ENCODE measurements at regions of chr15 and their contacts with region 1.

Region 1: DNA sequence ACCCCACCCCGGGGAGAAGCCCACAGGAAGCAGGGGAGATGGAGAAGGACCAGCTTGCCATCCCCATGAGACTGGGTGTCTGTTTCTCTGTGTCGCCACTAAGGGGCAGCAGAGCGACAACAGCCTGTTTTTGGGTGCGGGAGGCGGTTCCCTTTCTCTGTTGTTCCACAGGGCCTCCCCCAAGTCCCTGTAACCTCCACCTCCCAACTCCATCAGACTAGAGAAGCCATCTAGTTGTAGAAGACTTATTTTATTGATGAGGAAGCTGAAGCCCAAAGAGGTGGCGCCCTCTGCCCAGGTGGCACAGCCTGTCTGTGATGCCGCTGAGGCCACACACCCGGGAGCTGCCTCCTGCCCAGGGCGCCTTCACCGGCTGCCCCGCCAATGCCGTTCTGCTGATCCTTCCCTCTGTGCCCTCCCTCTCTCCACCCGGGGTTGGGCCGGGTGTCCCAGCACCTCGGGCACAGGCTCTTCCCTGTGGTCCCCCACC is 3.9 kb upstream of the CCDC9B start:
- DNase-seq: peak; percentile 83
- ATAC-seq: peak; percentile 85
- H3K4me3 Mint-ChIP-seq: no peak overlapping the region
- H3K27ac Mint-ChIP-seq: no peak overlapping the region
- H3K4me1 Mint-ChIP-seq: peaks cover 5% of the 10 kb centered on the region
- H3K27me3 Mint-ChIP-seq: no peaks in the 10 kb centered on the region

Region 2: DNA sequence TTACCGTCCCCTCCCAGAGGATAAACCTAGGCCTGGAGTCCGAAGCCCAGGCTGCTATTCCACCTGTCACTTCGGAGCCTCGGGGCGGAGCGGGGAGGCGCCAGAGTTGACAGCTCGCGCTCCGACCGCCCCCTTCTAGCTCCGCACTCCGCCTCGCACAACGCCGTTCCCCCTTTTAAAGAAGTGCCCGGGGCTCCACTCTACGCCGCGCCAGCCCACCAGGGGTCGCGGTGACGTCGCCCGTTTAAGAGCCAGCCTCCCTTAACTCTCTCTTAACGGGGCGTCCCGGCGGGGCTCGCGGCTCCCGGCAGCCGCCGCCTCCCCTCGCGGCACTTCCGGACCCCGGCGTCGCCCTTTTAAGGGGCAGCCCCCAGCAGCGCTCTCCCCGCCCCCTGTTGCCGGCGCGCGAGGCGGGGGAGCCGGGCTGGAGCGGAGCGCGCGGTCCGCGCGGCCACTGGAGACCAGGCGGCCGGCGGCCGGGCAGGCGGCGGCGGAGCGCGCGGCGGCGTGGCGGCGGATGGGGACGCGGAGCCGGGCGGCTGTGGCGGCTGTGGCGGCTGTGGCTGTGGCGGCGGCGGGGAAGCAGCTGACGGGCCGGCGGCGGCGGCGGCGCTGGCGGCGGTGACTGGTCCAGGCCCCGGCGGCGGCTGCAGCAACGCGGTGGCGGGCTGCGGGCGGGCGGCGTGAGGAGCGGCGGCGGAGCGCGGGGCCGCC is 21.3 kb before region 1 on chr15 and contains the start of gene INAFM2:
- CTCF ChIA-PET with region 1: interaction called, 326 read pairs
- POLR2A ChIA-PET with region 1: no interaction called
- DNase-seq: peak; percentile 95
- ATAC-seq: peak; percentile 91
- H3K4me3 Mint-ChIP-seq: peak within 1 kb of the TSS; percentile 73
- H3K27ac Mint-ChIP-seq: no peak within 1 kb of the TSS
- H3K4me1 Mint-ChIP-seq: peaks cover 31% of the 10 kb centered on the region
- H3K27me3 Mint-ChIP-seq: peaks cover 8% of the 10 kb centered on the region
- total RNA-seq, gene INAFM2: 8.7 to 9.4 TPM

Region 3: DNA sequence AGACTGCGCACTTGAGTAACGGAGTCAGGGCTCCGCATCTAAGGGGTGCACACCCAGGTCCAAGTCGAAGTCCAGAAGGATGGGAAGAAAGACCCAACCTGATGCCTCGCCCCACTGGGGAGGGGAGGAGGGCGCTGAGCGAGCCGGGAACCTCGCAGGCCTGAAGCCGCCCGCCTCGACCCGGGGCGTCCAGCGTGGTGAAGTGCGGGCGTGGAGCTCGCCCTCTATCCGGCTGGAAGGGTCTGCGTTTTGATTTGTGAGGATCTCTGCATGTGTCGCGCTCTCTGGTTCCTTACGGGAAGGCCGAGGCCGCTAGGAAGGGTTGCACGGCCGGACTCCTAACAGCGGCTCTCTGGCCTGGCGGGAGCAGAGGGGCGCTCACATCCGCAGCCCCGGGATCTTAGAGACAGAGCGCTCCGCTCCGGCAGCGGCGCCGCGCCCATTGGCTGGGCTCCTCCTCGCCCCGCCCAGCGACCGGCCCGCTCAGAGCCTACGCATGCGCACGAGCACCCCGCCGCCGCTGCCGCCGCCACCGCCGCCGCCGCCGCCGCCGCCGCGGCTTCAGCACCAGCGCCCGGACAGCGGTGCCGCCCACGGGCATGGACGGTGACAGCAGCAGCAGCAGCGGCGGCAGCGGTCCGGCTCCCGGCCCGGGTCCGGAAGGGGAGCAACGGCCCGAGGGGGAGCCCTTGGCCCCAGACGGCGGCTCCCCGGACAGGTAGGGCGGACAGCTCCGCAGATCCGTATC is 13.2 kb after region 1 on chr15 and contains the start of gene DISP2:
- CTCF ChIA-PET with region 1: interaction called, 27 read pairs
- POLR2A ChIA-PET with region 1: interaction called, 4 read pairs
- DNase-seq: peak; percentile 90
- ATAC-seq: peak; percentile 95
- H3K4me3 Mint-ChIP-seq: peak within 1 kb of the TSS; percentile 78
- H3K27ac Mint-ChIP-seq: no peak within 1 kb of the TSS
- H3K4me1 Mint-ChIP-seq: peaks cover 12% of the 10 kb centered on the region
- H3K27me3 Mint-ChIP-seq: peaks cover 11% of the 10 kb centered on the region
- total RNA-seq, gene DISP2: 0.82 to 2.6 TPM

Region 4: GRCh38 chr15:40372981-40373380 is 28.3 kb after region 1 on chr15:
- CTCF ChIA-PET with region 1: interaction called, 51 read pairs
- POLR2A ChIA-PET with region 1: no interaction called
- DNase-seq: no peak
- ATAC-seq: no peak
- H3K4me3 Mint-ChIP-seq: no peak overlapping the region
- H3K27ac Mint-ChIP-seq: no peak overlapping the region
- H3K4me1 Mint-ChIP-seq: peaks cover 8% of the 10 kb centered on the region
- H3K27me3 Mint-ChIP-seq: peaks cover 15% of the 10 kb centered on the region

Region 5: DNA sequence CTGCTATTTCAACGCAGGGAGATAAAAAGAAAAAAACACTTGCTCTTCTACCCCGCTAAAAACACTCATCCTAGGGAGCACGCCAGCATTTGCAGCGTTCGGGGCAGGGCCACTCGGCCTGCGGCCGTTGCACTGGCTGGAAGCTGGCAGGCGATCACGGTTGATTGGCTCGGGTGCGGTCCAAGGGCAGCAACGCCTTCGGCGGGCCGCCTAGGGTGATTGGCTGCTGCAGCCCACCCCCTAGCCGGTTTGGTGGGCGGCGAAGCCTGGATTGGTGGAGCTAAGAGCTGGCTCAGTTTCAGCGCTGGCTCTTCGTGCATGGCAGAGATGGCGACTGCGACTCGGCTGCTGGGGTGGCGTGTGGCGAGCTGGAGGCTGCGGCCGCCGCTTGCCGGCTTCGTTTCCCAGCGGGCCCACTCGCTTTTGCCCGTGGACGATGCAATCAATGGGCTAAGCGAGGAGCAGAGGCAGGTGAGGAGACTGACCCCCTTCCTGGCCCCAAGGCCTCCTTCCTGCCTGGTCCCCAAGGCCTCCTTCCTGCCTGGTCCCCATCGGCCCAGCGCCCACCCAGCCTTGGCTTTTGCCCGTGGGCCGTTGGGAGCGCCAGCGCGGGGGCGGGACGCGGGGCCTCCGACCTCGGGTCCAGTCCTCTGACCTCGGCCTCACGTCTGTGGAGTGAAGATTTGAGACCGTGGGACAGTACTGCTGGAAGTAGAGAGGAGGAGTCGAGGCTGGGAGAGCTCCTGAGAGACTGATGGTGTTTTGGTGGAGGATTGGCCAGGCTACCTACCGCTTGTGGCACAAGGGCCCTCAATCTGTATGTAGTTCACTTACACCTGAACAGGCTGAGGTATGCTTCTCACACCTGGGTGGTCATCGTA is 61.1 kb after region 1 on chr15 and contains the start of gene IVD:
- CTCF ChIA-PET with region 1: interaction called, 15 read pairs
- POLR2A ChIA-PET with region 1: no interaction called
- DNase-seq: peak; percentile 95
- ATAC-seq: peak; percentile 100
- H3K4me3 Mint-ChIP-seq: peak within 1 kb of the TSS; percentile 86
- H3K27ac Mint-ChIP-seq: peak within 1 kb of the TSS; percentile 95
- H3K4me1 Mint-ChIP-seq: peaks cover 45% of the 10 kb centered on the region
- H3K27me3 Mint-ChIP-seq: no peaks in the 10 kb centered on the region
- total RNA-seq, gene IVD: 77.7 to 79.9 TPM

Region 6: DNA sequence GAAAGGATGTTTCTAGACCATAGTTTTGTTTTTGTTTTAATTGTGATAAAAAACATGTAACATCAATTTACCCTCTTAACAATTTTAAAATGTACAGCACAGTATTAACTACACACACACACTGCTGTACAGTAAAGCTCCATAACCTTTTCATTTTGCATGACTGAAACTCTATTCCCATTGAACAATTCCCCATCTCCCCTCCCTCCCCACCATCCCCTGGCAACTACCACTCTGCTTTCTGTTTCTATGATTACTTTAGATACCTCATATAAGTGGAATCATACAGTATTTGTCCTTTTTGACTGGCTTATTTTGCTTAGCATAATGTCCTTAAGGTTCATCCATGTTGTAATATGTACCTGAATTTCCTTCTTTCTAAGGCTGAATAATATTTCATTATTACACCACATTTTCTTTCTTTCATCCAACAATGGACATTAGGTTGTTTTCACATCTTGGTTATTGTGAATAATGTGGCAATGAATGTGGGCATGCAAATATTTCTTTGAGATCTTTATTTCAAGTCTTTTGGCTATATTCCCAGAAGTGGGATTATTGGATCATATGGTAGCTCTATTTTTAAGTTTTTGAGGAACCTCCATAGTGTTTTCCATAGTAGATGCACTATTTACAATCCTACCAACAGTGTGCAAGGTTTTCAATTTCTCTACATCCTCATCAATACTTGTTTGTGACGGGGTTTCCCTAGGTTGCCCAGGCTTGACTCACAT is 136.8 kb after region 1 on chr15:
- CTCF ChIA-PET with region 1: no interaction called
- POLR2A ChIA-PET with region 1: no interaction called
- DNase-seq: no peak
- ATAC-seq: no peak
- H3K4me3 Mint-ChIP-seq: no peak overlapping the region
- H3K27ac Mint-ChIP-seq: no peak overlapping the region
- H3K4me1 Mint-ChIP-seq: no peaks in the 10 kb centered on the region
- H3K27me3 Mint-ChIP-seq: peaks cover 47% of the 10 kb centered on the region

Measured in activated CD8-positive, alpha-beta T cell treated with anti-CD3 and anti-CD28 coated beads, Interleukin-2, amount 10 ng/mL, durations not matched to agents 7 days and 5 days (primary cell).